Right ventricle myocardium superior (tissue), 1 donor: ENCODE measurements at regions of chr2 and their contacts with region 1.

Region 1: GRCh38 chr2:210002158-210003157 is at the start of gene RPE:
- DNase-seq: peak; percentile 98
- ATAC-seq: peak; percentile 100
- total RNA-seq, gene RPE: 16.1 TPM

Region 2: GRCh38 chr2:209391776-209392401 is 610.6 kb before region 1 on chr2:
- intact Hi-C with region 1: no loop called
- DNase-seq: no peak
- ATAC-seq: no peak

Region 3: GRCh38 chr2:209790066-209790728 is 212.3 kb before region 1 on chr2:
- intact Hi-C with region 1: no loop called
- DNase-seq: no peak
- ATAC-seq: no peak

Region 4: DNA sequence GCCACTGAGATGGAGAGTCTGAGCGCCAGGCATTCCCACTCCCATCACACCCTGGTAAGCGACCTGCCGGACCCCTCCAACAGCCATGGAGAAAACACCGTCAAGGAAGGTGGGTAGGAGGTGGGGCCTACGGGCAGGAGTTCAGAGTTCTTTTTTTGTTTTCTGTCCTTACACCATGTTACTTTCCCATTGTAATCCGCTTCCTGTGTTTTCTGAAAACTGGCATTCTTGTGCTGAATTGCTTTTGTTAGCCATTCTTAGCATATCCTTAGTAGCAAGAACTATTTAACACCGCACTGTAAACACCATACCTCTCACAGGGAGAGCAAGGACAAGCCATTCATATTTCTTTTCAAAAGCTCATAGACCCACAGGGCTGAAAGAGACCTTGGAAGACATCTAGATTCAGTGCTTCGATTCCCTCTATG is 184.6 kb before region 1 on chr2:
- intact Hi-C with region 1: no loop called
- DNase-seq: no peak
- ATAC-seq: no peak

Region 5: DNA sequence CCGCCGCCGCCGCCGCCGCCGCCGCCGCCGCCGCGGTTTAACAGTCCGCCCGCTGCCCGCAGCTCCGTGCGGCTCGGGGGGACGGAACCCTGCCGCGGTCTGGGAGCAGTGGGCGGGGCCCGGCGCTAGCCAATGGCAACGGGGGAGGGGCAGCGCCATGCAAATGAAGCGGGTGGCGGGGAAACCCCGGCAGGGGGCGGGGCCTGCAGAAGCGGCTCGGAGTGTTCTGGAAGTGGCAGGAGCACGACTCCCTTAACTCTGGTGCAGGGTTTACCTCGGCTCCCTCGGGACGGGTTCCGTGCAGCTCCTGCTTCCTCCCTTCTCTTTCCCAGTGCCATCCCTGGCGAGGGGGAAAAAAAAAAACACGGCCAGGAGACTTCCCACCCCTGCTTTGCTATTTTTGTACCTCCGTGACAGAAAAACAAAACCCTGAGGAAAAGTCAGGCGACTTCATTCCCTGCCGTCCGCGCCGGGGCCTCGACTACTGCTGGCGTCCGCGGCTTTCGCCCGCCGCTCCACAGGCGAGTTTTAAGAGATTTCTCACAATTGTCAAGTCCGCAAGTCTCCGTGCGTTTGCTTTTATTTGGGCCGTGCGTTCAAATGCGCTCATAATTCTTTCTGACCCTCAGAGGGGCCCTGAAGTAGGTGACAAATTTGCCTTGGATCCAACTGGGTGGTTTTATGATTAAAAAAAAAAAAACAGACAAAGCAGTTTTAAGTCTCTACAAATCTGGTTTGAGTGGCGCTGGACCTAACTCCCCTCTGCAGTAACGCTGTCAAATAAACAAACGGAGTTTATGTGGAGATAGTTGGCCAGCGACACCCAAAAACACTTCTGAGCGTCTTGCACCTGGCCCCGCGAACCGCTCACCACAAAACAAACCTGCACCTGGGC is 169.1 kb after region 1 on chr2 and contains the start of gene KANSL1L:
- intact Hi-C with region 1: loop called (anchors 10 kb)
- DNase-seq: peak; percentile 100
- ATAC-seq: peak; percentile 94
- total RNA-seq, gene KANSL1L: 15.8 TPM